Right ventricle myocardium superior (tissue), 1 donor: ENCODE measurements at regions of chr1 and their contacts with region 1.

Region 1: GRCh38 chr1:14824314-14824915 is 225.9 kb downstream of the KAZN start:
- DNase-seq: no peak
- ATAC-seq: no peak

Region 2: DNA sequence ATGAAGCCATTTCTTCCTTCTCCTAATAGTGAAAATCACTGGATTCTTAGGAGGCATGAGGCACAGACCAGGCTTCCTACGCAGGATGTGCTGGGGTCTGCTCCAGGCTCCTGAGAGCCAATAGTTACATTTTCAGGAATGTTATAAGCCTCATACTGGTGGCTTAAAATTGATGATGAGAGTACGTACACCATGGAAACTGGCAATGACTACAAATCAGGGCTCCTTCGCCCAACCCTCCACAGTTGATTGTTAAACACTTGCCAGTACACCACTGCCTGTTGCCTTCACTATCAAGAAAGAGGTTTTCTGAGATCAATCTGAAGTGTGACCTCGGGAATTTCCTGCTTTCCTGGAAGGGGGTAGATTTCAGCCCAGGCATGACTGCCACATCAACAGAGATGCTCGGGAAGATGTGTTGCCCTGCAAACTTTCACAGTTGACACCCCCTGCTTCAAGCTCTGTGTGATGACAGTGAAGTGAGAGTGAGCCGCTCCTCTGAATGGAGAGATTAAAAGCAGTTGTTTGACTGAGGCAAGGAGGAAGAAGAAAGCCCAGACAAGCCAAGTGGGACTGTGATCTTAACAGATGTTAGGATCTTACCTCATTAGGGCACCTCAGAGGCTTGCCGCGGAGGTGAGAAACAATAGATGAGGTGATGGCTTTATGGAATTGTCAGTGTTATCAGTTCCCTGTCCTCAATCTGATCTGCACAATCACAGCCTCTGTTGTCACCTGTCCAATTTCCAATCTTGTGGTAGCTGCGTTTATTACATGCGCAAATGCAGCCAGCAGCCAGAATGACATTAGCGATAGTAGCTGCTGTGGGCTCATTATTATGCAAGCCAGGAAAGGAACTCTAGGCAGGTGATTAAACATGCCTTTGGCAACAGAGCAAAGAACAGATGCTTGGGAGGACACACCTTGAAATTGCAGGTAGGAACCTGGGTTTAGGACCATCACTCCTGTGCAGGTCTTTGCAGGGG is 51.4 kb after region 1 on chr1:
- intact Hi-C with region 1: loop called (anchors 2 kb)
- DNase-seq: no peak
- ATAC-seq: no peak